Activated T-helper 2 cell treated with anti-CD3 and anti-CD28 coated beads, Interferon-gamma antibody, Interleukin-2, Interleukin-4, amounts not matched to agents 10 μg/mL and 5 μg/mL and 100 μg/mL, durations not matched to agents 14 hours and 24 hours and 36 hours (primary cell): ENCODE measurements at regions of chr6 and their contacts with region 1.

Region 1: GRCh38 chr6:63527658-63528514 is 44.4 kb upstream of the LOC128125822 start:
- DNase-seq: no peak
- H3K4me3 Mint-ChIP-seq: no peak overlapping the region
- H3K27ac Mint-ChIP-seq: peak overlapping the region; percentile 62
- H3K4me1 Mint-ChIP-seq: peaks cover 49% of the 10 kb centered on the region
- H3K27me3 Mint-ChIP-seq: no peaks in the 10 kb centered on the region

Region 2: DNA sequence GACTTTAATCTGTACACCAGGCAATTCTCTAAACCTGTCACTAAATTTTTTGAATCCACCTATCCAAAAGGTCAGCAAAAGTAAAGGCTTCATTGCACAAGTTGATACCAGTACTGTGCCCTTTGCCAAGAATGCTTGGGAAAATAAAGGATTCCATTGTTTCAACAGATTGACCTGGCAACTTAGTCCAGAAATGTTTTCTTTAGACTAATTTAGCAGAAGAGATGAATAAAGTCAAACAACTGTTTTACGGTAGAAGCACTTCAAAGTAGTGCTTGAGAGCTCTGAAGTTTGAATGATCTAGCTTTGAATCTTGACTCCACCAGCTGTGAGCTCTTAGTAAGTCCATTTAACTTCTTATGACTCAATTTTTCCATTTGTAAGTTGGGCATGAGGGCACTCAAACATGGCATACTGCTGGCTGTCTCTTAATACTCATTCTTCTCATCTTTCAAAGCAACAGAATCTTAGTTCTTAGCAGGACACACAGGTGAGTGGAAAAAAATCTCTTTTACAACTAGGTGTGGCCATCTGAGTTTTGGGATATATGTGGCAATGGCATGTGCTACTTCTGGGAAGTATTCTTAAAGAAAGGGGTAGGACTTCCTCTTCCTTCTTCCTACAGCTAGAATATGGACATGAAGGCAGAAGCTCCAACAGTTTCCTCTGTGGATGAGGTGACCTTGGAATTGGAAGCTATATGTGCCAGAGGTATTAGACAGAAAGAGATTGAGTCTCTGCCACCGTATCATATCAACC is 11.5 kb before region 1 on chr6:
- intact Hi-C with region 1: no loop called
- DNase-seq: no peak
- H3K4me3 Mint-ChIP-seq: no peak overlapping the region
- H3K27ac Mint-ChIP-seq: no peak overlapping the region
- H3K4me1 Mint-ChIP-seq: peaks cover 15% of the 10 kb centered on the region
- H3K27me3 Mint-ChIP-seq: peaks cover 14% of the 10 kb centered on the region

Region 3: DNA sequence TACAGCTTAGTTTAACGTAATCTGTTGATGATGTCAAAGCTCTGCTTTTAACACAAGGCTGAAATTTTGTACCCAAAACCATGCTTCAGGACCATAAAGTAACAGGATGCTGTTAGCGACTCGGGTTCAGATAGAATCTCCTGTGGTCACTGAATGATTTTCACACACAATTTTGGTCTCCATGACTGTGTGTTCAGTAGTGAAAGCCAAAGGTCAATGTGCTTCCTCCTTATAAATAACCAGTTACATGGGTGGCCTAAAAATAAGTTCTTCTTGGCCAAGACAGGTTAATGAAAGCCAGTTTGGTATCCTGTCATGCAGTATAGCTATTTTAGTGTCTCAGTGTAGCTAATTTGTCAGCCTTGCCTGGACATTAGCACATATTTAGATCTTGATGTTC is 25.3 kb after region 1 on chr6:
- intact Hi-C with region 1: loop called (anchors 1 kb)
- DNase-seq: no peak
- H3K4me3 Mint-ChIP-seq: peak overlapping the region; percentile 3
- H3K27ac Mint-ChIP-seq: peak overlapping the region; percentile 62
- H3K4me1 Mint-ChIP-seq: peaks cover 13% of the 10 kb centered on the region
- H3K27me3 Mint-ChIP-seq: no peaks in the 10 kb centered on the region